Activated T-helper 2 cell treated with anti-CD3 and anti-CD28 coated beads, Interferon-gamma antibody, Interleukin-2, Interleukin-4, amounts not matched to agents 10 μg/mL and 5 μg/mL and 100 μg/mL, durations not matched to agents 14 hours and 24 hours and 36 hours (primary cell): ENCODE measurements at regions of chr7 and their contacts with region 1.

Region 1: GRCh38 chr7:16918288-16918895 is 36.6 kb upstream of the AGR3 start:
- DNase-seq: no peak
- H3K4me3 Mint-ChIP-seq: no peak overlapping the region
- H3K27ac Mint-ChIP-seq: no peak overlapping the region
- H3K4me1 Mint-ChIP-seq: peaks cover 32% of the 10 kb centered on the region
- H3K27me3 Mint-ChIP-seq: peaks cover 3% of the 10 kb centered on the region

Region 2: GRCh38 chr7:16619979-16620408 is 298.4 kb before region 1 on chr7:
- intact Hi-C with region 1: loop called (anchors 2 kb)
- DNase-seq: no peak
- H3K4me3 Mint-ChIP-seq: peak overlapping the region; percentile 7
- H3K27ac Mint-ChIP-seq: peak overlapping the region; percentile 82
- H3K4me1 Mint-ChIP-seq: peaks cover 20% of the 10 kb centered on the region
- H3K27me3 Mint-ChIP-seq: no peaks in the 10 kb centered on the region

Region 3: GRCh38 chr7:16685502-16685901 is 232.9 kb before region 1 on chr7:
- intact Hi-C with region 1: no loop called
- DNase-seq: no peak
- H3K4me3 Mint-ChIP-seq: peak overlapping the region; percentile 7
- H3K27ac Mint-ChIP-seq: peak overlapping the region; percentile 79
- H3K4me1 Mint-ChIP-seq: peaks cover 20% of the 10 kb centered on the region
- H3K27me3 Mint-ChIP-seq: no peaks in the 10 kb centered on the region

Region 4: GRCh38 chr7:16695621-16696237 is 222.7 kb before region 1 on chr7:
- intact Hi-C with region 1: loop called (anchors 5 kb)
- DNase-seq: no peak
- H3K4me3 Mint-ChIP-seq: no peak overlapping the region
- H3K27ac Mint-ChIP-seq: no peak overlapping the region
- H3K4me1 Mint-ChIP-seq: peaks cover 5% of the 10 kb centered on the region
- H3K27me3 Mint-ChIP-seq: no peaks in the 10 kb centered on the region

Region 5: GRCh38 chr7:16891338-16891737 is 27.1 kb before region 1 on chr7:
- intact Hi-C with region 1: loop called (anchors 2 kb)
- DNase-seq: no peak
- H3K4me3 Mint-ChIP-seq: no peak overlapping the region
- H3K27ac Mint-ChIP-seq: no peak overlapping the region
- H3K4me1 Mint-ChIP-seq: peaks cover 10% of the 10 kb centered on the region
- H3K27me3 Mint-ChIP-seq: peaks cover 12% of the 10 kb centered on the region

Region 6: GRCh38 chr7:17530741-17531417 is 612.5 kb after region 1 on chr7:
- intact Hi-C with region 1: loop called (anchors 5 kb)
- DNase-seq: no peak
- H3K4me3 Mint-ChIP-seq: no peak overlapping the region
- H3K27ac Mint-ChIP-seq: no peak overlapping the region
- H3K4me1 Mint-ChIP-seq: peaks cover 13% of the 10 kb centered on the region
- H3K27me3 Mint-ChIP-seq: peaks cover 6% of the 10 kb centered on the region